ENCODE measurements at regions of chr2 and their contacts with region 1.

Region 1: DNA sequence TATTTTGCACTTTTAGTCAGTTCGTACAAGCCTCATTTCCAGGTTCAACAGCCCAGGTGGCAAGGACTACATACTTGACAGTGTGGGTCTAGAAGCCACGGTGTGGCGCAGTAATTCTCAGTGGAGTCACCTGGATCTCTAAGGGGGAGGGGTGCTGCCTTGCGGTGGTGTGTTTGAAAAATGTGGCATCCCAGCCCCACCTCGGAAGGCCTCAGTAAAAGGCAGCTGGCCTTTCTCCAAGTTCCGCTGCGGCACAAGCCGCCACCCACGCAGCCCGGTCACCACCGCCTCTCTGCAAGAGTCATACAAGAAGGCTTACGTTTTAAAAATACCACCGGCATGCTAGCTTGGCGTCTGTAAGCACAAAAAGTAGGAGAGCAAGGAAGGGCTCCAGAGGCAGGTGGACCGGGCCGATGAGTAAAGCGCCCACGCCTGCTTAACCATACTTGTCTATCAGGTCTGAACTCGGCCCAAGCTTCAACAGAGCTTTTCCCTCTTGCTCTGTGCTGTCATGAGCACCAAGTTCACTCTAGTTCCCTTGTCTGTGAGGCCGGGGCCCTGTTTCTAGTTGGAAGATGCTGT is 49.5 kb downstream of the SPRED2 start:
- DNase-seq: no peak
- ATAC-seq: no peak
- H3K4me3 ChIP-seq: no peak overlapping the region
- H3K27ac ChIP-seq: peak overlapping the region; percentile 65
- H3K4me1 ChIP-seq: peaks cover 42% of the 10 kb centered on the region
- H3K27me3 ChIP-seq: no peaks in the 10 kb centered on the region
- CTCF ChIP-seq: peak in 1 of 3 experiments; percentile 37; a peak in 2 of 6 replicates
- EP300 ChIP-seq: no peak
- POLR2A ChIP-seq: no peak
- RAD21 ChIP-seq: peak; percentile 63

Region 2: GRCh38 chr2:65240657-65241056 is 142.2 kb before region 1 on chr2:
- CTCF ChIA-PET with region 1: no interaction called
- POLR2A ChIA-PET with region 1: no interaction called
- RAD21 ChIA-PET with region 1: no interaction called
- SMC1A ChIA-PET with region 1: no interaction called
- in situ Hi-C with region 1: no loop called
- intact Hi-C with region 1: no loop called
- DNase-seq: no peak
- ATAC-seq: no peak
- H3K4me3 ChIP-seq: no peak overlapping the region
- H3K27ac ChIP-seq: no peak overlapping the region
- H3K4me1 ChIP-seq: no peaks in the 10 kb centered on the region
- H3K27me3 ChIP-seq: no peaks in the 10 kb centered on the region
- CTCF ChIP-seq: no peak
- EP300 ChIP-seq: no peak
- POLR2A ChIP-seq: no peak
- RAD21 ChIP-seq: no peak

Region 3: GRCh38 chr2:65329525-65329924 is 53.3 kb before region 1 on chr2:
- CTCF ChIA-PET with region 1: no interaction called
- POLR2A ChIA-PET with region 1: no interaction called
- RAD21 ChIA-PET with region 1: interaction called, 3 read pairs
- SMC1A ChIA-PET with region 1: interaction called, 10 read pairs
- in situ Hi-C with region 1: no loop called
- intact Hi-C with region 1: no loop called
- DNase-seq: no peak
- ATAC-seq: no peak
- H3K4me3 ChIP-seq: no peak overlapping the region
- H3K27ac ChIP-seq: no peak overlapping the region
- H3K4me1 ChIP-seq: no peaks in the 10 kb centered on the region
- H3K27me3 ChIP-seq: no peaks in the 10 kb centered on the region
- CTCF ChIP-seq: no peak
- EP300 ChIP-seq: no peak
- POLR2A ChIP-seq: no peak
- RAD21 ChIP-seq: no peak